ENCODE measurements at regions of chr2 and their contacts with region 1.

Region 1: GRCh38 chr2:167484875-167485274 is 596.6 kb downstream of the XIRP2 start:
- DNase-seq: no peak
- ATAC-seq: no peak
- H3K4me3 ChIP-seq: no peak overlapping the region
- H3K4me3 Mint-ChIP-seq: no peak overlapping the region
- H3K27ac ChIP-seq: no peak overlapping the region
- H3K27ac Mint-ChIP-seq: no peak overlapping the region
- H3K4me1 ChIP-seq: no peaks in the 10 kb centered on the region
- H3K4me1 Mint-ChIP-seq: no peaks in the 10 kb centered on the region
- H3K27me3 ChIP-seq: no peaks in the 10 kb centered on the region
- H3K27me3 Mint-ChIP-seq: no peaks in the 10 kb centered on the region
- CTCF ChIP-seq: no peak

Region 2: DNA sequence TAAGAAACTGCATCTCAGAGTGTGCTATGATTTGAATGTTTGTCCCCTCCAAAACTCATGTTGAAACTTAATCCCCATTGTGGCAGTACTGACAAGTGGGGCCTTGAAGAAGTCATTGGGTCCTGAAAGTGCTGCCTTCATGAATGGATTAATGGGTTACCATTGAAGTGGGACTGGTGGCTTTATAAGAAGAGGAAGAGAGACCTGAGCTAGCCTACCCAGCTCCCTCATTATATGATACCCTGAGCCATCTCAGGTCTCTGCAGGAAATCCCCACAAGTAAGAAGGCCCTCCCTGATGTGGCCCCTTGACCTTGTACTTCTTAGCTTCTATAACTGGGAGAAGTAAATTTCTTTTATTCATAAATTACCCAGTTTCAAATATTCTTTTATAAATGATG is 69.8 kb before region 1 on chr2:
- CTCF ChIA-PET with region 1: no interaction called
- POLR2A ChIA-PET with region 1: no interaction called
- intact Hi-C with region 1: loop called (anchors 2 kb)
- DNase-seq: no peak
- ATAC-seq: no peak
- H3K4me3 ChIP-seq: no peak overlapping the region
- H3K4me3 Mint-ChIP-seq: no peak overlapping the region
- H3K27ac ChIP-seq: no peak overlapping the region
- H3K27ac Mint-ChIP-seq: no peak overlapping the region
- H3K4me1 ChIP-seq: no peaks in the 10 kb centered on the region
- H3K4me1 Mint-ChIP-seq: no peaks in the 10 kb centered on the region
- H3K27me3 ChIP-seq: no peaks in the 10 kb centered on the region
- H3K27me3 Mint-ChIP-seq: no peaks in the 10 kb centered on the region
- CTCF ChIP-seq: no peak